Sigmoid colon (tissue), 7 donors: ENCODE measurements at regions of chr9 and their contacts with region 1.

Region 1: GRCh38 chr9:124940693-124941453 is at the start of gene GOLGA1:
- DNase-seq: peak; percentile 98
- H3K4me3 ChIP-seq: peak within 1 kb of the TSS; percentile 66 to 90 (median 70)
- H3K27ac ChIP-seq: peak within 1 kb of the TSS; percentile 92 to 98 (median 96)
- H3K4me1 ChIP-seq: peaks cover 0 to 17% (median 16%) of the 10 kb centered on the region in 4 donors
- H3K27me3 ChIP-seq: no peaks in the 10 kb centered on the region
- CTCF ChIP-seq: no peak
- EP300 ChIP-seq: peak in 2 of 4 donors; percentile 27 to 47
- POLR2A ChIP-seq: peak; percentile 75 to 85
- total RNA-seq, gene GOLGA1: 15.1 to 32.1 (median 23.6) TPM

Region 2: GRCh38 chr9:124754289-124754688 is 186.6 kb before region 1 on chr9:
- intact Hi-C with region 1: no loop called
- DNase-seq: no peak
- H3K4me3 ChIP-seq: no peak overlapping the region
- H3K27ac ChIP-seq: no peak overlapping the region
- H3K4me1 ChIP-seq: peaks cover 0 to 5% (median 0%) of the 10 kb centered on the region in 4 donors
- H3K27me3 ChIP-seq: peaks cover 0 to 49% (median 0%) of the 10 kb centered on the region in 3 donors
- CTCF ChIP-seq: no peak
- EP300 ChIP-seq: no peak
- POLR2A ChIP-seq: no peak

Region 3: GRCh38 chr9:124771021-124771866 is 169.6 kb before region 1 on chr9 and contains the start of gene NR6A1:
- intact Hi-C with region 1: loop called (anchors 5 kb)
- DNase-seq: peak; percentile 98
- H3K4me3 ChIP-seq: peak within 1 kb of the TSS; percentile 50 to 92 (median 82)
- H3K27ac ChIP-seq: peak within 1 kb of the TSS; percentile 78 to 86 (median 78)
- H3K4me1 ChIP-seq: peaks cover 0 to 40% (median 23%) of the 10 kb centered on the region in 4 donors
- H3K27me3 ChIP-seq: peaks cover 0 to 49% (median 39%) of the 10 kb centered on the region in 3 donors
- CTCF ChIP-seq: peak in 2 of 4 experiments; percentile 19 to 28
- EP300 ChIP-seq: no peak
- POLR2A ChIP-seq: no peak
- total RNA-seq, gene NR6A1: 1.2 to 3.0 (median 2.0) TPM

Region 4: GRCh38 chr9:124868511-124869465 is 72.1 kb before region 1 on chr9:
- intact Hi-C with region 1: loop called (anchors 2 kb)
- DNase-seq: peak; percentile 92
- H3K4me3 ChIP-seq: peak overlapping the region; percentile 82 to 98 (median 90)
- H3K27ac ChIP-seq: peak overlapping the region; percentile 93 to 98 (median 94)
- H3K4me1 ChIP-seq: peaks cover 0 to 54% (median 50%) of the 10 kb centered on the region in 4 donors
- H3K27me3 ChIP-seq: no peaks in the 10 kb centered on the region
- CTCF ChIP-seq: no peak
- EP300 ChIP-seq: no peak
- POLR2A ChIP-seq: peak; percentile 81 to 88

Region 5: DNA sequence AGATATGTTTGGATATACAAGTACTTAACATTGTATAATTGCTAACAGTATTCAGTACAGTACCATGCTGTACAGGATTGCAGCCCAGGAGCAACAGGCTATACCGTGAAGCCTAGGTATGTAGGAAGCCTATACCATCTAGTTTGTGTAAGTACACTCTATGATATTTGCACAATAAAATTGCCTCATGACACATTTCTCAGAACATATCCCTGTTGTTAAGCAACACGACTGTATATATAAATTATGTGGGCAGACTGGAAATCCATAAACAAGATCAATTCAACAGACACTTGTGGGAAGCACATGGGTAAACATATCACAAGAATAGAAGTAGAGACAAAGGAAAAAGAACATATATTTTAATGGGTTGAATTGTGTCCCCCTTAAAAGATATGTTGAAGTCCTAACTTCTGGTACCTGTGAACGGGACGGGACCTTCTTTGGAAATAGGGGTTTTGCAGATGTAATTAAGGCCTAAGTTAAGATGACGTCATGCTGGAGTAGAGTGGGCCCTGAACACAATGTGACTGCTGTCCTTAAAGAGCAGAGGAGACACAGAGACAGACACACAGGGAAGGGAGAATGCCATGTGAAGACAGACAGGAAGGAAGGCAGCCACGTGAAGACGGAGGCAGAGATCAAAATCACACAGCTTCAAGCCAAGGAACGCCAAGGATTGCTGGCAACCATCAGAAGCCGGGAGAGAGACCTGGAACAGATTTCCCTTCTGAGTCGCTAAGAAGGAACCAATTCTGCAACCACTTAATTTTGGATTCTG is 126.2 kb after region 1 on chr9:
- intact Hi-C with region 1: loop called (anchors 5 kb)
- DNase-seq: no peak
- H3K4me3 ChIP-seq: no peak overlapping the region
- H3K27ac ChIP-seq: peak overlapping the region in 3 of 4 donors; percentile 39 to 68 (median 59)
- H3K4me1 ChIP-seq: peaks cover 0 to 18% (median 13%) of the 10 kb centered on the region in 4 donors
- H3K27me3 ChIP-seq: no peaks in the 10 kb centered on the region
- CTCF ChIP-seq: no peak
- EP300 ChIP-seq: no peak
- POLR2A ChIP-seq: no peak

Region 6: DNA sequence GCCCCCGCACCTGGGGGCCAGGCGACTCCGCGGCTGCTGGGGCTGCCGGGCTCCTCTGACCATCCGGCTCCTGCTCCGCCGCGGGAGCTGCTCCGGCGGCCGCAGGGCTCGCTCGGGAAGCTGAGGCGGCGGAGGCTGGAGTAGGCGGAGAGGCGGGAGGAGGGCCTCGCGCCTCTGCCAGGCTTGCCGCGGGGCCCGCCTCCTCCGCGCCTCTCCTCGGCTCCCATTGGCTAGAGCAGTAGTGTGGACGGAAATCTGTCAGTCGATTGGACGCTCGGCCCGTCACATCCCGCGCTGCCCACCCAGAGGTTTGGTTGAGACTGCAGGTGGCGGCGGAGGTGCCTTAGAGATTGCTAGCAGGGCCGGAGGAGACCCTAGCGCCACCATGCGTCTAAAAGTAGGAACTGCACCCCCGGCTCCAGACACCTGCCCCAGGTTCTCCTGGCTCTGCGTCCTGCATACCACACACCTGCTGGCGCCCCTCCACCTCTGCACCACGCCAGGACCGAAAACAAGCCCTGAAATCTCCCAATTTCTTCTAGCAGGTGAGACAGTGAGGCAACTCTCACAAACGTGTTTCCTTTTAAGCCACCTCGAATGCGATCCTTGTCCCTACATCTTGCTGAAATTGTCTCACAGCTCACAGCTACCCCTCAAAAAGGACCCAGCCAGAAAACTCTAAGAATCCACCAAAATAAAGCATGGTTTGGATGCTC is 202.7 kb after region 1 on chr9 and contains the start of gene SCAI:
- intact Hi-C with region 1: loop called (anchors 1 kb)
- DNase-seq: peak; percentile 100
- H3K4me3 ChIP-seq: peak within 1 kb of the TSS; percentile 73 to 96 (median 86)
- H3K27ac ChIP-seq: peak within 1 kb of the TSS; percentile 83 to 87 (median 84)
- H3K4me1 ChIP-seq: peaks cover 0 to 51% (median 30%) of the 10 kb centered on the region in 4 donors
- H3K27me3 ChIP-seq: no peaks in the 10 kb centered on the region
- CTCF ChIP-seq: peak; percentile 98 to 99 (median 99)
- EP300 ChIP-seq: no peak
- POLR2A ChIP-seq: no peak
- total RNA-seq, gene SCAI: 5.4 to 15.8 (median 11.4) TPM

Region 7: GRCh38 chr9:125189361-125190289 is 248.8 kb after region 1 on chr9 and contains the start of gene PPP6C:
- intact Hi-C with region 1: loop called (anchors 5 kb)
- DNase-seq: peak; percentile 98
- H3K4me3 ChIP-seq: peak within 1 kb of the TSS; percentile 78 to 100 (median 89)
- H3K27ac ChIP-seq: peak within 1 kb of the TSS; percentile 91 to 97 (median 94)
- H3K4me1 ChIP-seq: peaks cover 0 to 40% (median 34%) of the 10 kb centered on the region in 4 donors
- H3K27me3 ChIP-seq: no peaks in the 10 kb centered on the region
- CTCF ChIP-seq: peak; percentile 31 to 57 (median 44)
- EP300 ChIP-seq: peak in 1 of 4 donors; percentile 30
- POLR2A ChIP-seq: peak; percentile 79 to 89
- total RNA-seq, gene PPP6C: 24.9 to 34.6 (median 31.5) TPM

Region 8: DNA sequence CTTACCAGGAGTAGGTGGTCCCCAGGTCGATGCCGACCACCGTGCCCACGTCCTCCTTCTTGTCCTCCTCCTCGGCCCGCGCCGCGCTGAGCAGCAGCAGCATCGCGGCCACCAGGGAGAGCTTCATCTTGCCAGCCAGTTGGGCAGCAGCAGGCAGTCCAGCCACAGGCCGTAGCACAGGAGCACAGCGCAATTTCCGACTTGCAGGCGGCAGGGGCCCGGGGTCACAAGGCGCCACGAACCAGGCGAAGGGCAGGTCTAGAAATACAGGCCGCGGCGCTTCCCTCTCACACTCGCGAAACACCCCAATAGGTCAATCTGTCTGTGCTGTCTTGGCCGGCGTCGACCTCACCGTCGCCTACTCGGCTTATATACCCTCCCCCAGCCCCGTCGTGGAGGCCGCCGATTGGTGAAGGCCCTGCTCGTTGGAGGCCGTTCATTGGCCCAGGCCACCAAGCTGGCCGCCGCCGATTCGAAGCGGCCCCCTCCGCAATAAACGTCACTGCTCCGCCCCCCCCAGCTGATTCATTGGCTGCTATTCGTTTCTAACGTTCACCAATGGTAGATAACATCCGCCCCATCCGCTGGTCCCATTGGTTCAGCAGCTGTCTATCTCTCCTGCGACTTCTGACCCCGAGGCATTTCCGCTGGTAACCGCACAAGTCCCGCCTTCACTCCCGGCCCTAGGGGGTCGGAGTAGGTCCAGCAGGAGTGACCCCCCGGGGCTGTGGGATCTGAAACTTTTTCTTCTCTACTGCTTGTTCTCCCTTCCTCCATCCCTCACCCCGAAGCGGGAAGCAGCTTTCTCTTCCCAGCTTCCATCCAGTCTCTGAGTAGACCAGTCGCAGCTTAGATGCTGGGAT is 300.4 kb after region 1 on chr9 and contains the start of gene HSPA5:
- intact Hi-C with region 1: loop called (anchors 5 kb)
- DNase-seq: peak; percentile 100
- H3K4me3 ChIP-seq: peak within 1 kb of the TSS; percentile 90 to 97 (median 96)
- H3K27ac ChIP-seq: peak within 1 kb of the TSS; percentile 94 to 100 (median 98)
- H3K4me1 ChIP-seq: peaks cover 0 to 49% (median 46%) of the 10 kb centered on the region in 4 donors
- H3K27me3 ChIP-seq: no peaks in the 10 kb centered on the region
- CTCF ChIP-seq: peak in 1 of 4 experiments; percentile 18
- EP300 ChIP-seq: no peak
- POLR2A ChIP-seq: peak; percentile 93 to 95
- total RNA-seq, gene HSPA5: 46.5 to 65.4 (median 58.7) TPM